Activated T-helper 2 cell treated with anti-CD3 and anti-CD28 coated beads, Interferon-gamma antibody, Interleukin-2, Interleukin-4, amounts not matched to agents 10 μg/mL and 5 μg/mL and 100 μg/mL, durations not matched to agents 14 hours and 24 hours and 36 hours (primary cell): ENCODE measurements at regions of chr17 and their contacts with region 1.

Region 1: DNA sequence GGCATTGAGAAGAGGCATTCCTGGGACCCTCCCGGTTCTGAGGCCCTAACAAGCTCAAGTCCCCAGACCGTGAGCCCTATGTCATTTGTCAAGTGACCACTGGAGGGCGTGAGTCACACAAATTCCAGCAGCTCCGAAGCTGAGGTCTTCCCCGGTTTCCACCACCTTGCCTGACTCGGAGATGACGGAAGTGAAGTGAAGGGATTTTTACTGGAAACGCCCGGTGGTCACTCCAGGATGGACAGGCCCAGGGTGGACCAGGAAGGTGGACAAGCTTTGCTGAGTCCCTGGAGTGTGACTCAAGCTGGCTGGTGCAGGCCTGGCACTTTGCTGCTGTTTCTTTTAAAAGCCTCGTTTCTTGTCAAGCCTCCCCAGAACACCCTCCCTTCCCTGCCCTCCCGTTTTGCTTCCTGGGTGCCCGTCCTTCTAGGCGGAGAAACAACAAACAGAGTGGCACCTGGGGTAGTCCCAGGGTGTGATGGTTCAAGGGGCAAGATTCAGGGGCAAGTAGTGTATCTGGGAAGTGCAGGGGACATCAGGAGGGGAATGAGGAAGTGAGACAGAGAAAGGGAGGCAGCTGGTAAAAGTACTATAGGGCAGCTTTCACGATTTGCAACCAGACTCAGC is 5.3 kb upstream of the NOS2 start:
- DNase-seq: peak; percentile 76
- H3K4me3 Mint-ChIP-seq: peak overlapping the region; percentile 28
- H3K27ac Mint-ChIP-seq: peak overlapping the region; percentile 84
- H3K4me1 Mint-ChIP-seq: peaks cover 40% of the 10 kb centered on the region
- H3K27me3 Mint-ChIP-seq: no peaks in the 10 kb centered on the region

Region 2: GRCh38 chr17:27760069-27760885 is 45.4 kb before region 1 on chr17:
- intact Hi-C with region 1: loop called (anchors 5 kb)
- DNase-seq: peak; percentile 58
- H3K4me3 Mint-ChIP-seq: no peak overlapping the region
- H3K27ac Mint-ChIP-seq: no peak overlapping the region
- H3K4me1 Mint-ChIP-seq: no peaks in the 10 kb centered on the region
- H3K27me3 Mint-ChIP-seq: no peaks in the 10 kb centered on the region

Region 3: DNA sequence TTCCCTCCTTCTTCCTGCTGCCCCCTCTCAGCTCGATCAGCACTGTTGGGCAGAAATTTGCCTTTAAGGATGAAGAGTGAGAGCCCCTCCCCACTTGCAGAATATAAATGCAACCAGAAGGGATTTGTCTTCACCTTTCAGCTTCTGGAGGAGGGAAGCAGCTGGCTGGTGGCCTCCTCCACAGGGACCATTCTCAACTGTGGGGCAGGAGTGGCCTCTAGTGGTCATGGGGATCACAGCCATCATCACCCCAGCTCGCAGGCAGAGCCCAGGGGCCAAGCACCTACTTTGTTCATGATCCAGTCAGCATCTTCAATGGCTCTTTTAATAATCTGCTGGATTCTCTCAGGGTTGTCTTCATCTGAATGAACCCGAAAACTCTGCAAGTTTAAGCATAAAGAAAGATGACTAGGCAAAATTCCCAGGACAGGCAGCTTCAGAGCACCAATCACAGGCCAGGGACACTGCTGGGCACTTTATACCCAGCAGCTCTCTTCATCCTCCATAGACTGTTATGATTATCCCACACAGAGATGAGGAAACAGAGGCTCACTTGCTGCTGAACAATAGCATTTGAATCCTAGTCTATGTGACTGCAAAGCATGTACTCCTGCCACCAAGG is 74.5 kb after region 1 on chr17:
- intact Hi-C with region 1: loop called (anchors 1 kb)
- DNase-seq: peak; percentile 58
- H3K4me3 Mint-ChIP-seq: no peak overlapping the region
- H3K27ac Mint-ChIP-seq: no peak overlapping the region
- H3K4me1 Mint-ChIP-seq: peaks cover 17% of the 10 kb centered on the region
- H3K27me3 Mint-ChIP-seq: peaks cover 5% of the 10 kb centered on the region

Region 4: DNA sequence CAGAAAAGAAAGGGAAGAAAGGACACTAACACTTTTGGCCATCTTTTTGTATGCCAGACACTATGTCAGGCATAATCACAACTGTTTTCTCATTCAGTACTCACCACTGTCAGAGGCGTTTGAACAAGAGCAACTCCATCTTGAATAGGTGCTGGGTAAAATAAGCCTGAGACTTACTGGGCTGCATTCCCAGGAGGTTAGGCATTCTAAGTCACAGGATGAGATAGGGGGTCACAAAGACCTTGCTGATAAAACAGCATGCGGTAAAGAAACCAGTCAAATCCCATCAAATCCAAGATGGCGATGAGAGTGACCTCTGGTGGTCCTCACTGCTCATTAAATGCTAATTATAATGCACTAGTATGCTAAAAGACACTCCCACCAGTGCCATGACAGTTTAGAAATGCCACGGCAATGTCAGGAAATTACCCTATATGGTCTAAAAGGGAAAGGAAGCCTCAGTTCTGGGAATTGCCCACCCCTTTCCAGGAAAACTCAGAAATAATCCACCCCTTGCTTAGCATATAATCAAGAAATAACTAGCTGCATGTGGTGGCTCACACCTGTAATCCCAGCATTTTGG is 102.4 kb after region 1 on chr17:
- intact Hi-C with region 1: no loop called
- DNase-seq: no peak
- H3K4me3 Mint-ChIP-seq: no peak overlapping the region
- H3K27ac Mint-ChIP-seq: no peak overlapping the region
- H3K4me1 Mint-ChIP-seq: no peaks in the 10 kb centered on the region
- H3K27me3 Mint-ChIP-seq: peaks cover 8% of the 10 kb centered on the region